Mammary epithelial cell (primary cell): ENCODE measurements at regions of chr6 and their contacts with region 1.

Region 1: GRCh38 chr6:47302043-47302442 is 7.7 kb downstream of the TNFRSF21 start:
- DNase-seq: no peak
- H3K4me3 ChIP-seq: no peak overlapping the region
- H3K27ac ChIP-seq: no peak overlapping the region
- H3K4me1 ChIP-seq: peaks cover 11% of the 10 kb centered on the region
- H3K27me3 ChIP-seq: no peaks in the 10 kb centered on the region
- CTCF ChIP-seq: no peak

Region 2: GRCh38 chr6:47264775-47265184 is 37.3 kb before region 1 on chr6:
- CTCF ChIA-PET with region 1: no interaction called
- dilution Hi-C with region 1: no loop called
- in situ Hi-C with region 1: no loop called
- intact Hi-C with region 1: loop called (anchors 5 kb)
- DNase-seq: no peak
- H3K4me3 ChIP-seq: no peak overlapping the region
- H3K27ac ChIP-seq: no peak overlapping the region
- H3K4me1 ChIP-seq: no peaks in the 10 kb centered on the region
- H3K27me3 ChIP-seq: no peaks in the 10 kb centered on the region
- CTCF ChIP-seq: no peak